Dendritic cell treated with granulocyte-macrophage colony-stimulating factor and Interleukin-4, amounts not matched to agents 40 ng/mL and 50 ng/mL, for 4 days (primary cell): ENCODE measurements at regions of chr10 and their contacts with region 1.

Region 1: DNA sequence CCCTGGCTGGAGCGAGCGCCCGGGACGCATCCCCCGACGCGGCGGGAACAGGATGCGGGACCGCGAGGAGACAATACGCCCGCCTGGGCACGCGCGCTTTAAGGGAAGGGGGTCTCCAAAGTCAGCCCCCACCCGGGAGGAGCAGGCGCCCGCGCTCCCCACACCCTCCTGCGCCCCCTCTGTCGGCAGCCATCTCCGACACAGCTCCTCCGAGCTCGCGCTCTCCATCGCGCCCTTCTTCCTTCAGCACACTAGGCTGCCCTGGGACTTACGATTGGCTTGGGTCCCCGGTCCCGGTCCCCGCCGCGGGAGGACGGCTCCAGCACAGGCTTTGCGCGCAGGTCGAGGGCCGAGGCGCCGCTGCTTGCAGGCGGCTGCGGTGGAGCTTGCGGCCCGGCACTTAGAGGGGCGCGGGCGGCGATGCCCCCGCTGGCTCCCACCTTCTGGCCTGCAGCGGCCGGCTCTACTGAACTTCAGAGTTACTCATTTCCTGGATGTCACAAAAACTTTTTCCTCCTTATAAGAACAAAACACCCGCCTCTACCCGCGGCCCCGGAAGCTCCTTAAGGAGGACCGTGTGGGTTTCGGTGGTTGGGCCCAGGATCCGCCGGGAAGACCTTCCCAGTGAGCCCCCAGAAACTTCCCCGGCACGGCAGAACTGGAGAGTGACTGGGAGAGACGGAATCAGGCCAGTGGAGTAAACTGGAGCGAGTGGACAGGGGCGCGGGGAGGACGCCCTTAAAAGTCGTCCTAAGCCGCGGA is at the start of gene ITPRIP:
- H3K4me3 Mint-ChIP-seq: peak within 1 kb of the TSS; percentile 88
- H3K27ac Mint-ChIP-seq: peak within 1 kb of the TSS; percentile 94
- H3K4me1 Mint-ChIP-seq: peaks cover 60% of the 10 kb centered on the region
- H3K27me3 Mint-ChIP-seq: peaks cover 9% of the 10 kb centered on the region

Region 2: GRCh38 chr10:104268716-104269645 is 69.2 kb before region 1 on chr10 and contains the start of gene GSTO2:
- intact Hi-C with region 1: loop called (anchors 2 kb)
- H3K4me3 Mint-ChIP-seq: peak within 1 kb of the TSS; percentile 91
- H3K27ac Mint-ChIP-seq: peak within 1 kb of the TSS; percentile 92
- H3K4me1 Mint-ChIP-seq: peaks cover 8% of the 10 kb centered on the region
- H3K27me3 Mint-ChIP-seq: no peaks in the 10 kb centered on the region

Region 3: DNA sequence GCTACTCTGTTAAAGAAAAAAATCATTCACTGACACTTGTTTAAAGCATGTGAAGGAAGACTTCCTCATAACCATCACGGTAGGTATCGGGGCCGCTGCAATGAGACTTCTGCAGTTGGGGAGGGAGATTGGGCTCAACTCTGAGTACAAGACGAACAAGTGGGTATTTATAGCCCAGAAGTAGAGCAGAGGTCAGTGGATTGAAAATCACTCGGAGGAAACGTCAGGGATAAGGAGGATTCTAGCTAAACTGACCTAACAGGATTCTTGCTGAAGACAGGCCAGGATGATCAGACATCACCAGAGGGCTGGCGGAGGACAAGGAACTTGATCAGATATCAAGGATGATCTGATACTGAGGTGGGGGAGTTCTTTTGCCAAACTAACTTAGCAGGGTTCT is 33.2 kb before region 1 on chr10:
- intact Hi-C with region 1: loop called (anchors 1 kb)
- H3K4me3 Mint-ChIP-seq: no peak overlapping the region
- H3K27ac Mint-ChIP-seq: no peak overlapping the region
- H3K4me1 Mint-ChIP-seq: peaks cover 30% of the 10 kb centered on the region
- H3K27me3 Mint-ChIP-seq: peaks cover 4% of the 10 kb centered on the region

Region 4: DNA sequence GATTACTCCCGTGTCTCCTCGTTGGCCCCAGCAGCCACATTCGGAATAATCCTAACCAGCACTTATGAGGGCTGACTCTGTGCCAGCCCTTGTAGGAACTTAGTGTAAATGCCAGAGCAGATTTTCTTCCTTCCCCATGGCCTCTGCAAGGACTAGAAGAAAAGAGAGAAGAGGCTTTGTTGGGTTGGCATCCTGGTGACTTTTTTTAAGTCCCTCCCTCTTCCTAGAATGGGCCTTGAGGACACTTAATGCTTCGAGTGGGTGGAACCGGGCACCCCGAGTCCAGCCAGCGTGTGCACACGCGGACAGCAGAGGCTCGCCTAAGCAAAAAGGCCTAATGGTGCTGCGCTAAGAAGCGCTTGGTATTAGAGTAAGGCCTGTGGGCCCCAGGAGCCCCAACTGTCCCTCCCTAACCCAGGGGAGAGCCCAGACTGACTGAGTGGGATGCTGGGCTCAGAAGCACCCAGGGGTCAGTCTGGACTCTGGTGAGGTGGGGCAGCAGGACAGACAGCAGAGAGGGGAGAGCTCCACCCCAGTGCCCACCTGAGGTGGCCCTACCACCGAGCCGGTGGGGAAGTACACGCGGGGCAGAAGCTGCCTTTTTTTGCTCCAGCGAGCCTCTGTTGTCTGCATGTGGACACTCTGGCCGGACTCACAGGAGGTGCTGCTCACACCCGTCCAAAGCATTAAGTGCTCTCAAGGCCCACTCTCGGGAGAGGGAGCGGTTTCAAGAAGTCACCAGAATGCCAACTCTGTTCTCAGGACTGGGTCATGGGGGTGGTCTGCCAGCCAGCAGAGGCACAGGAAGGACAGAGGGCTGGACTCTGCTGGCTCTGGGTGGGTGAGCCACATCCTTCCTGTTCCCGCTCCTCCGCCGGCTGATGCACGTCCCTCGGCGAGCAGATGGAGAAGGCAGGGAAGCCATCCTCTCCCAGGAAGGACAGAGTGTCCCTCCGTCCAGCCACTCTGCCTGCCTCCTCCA is 12.4 kb before region 1 on chr10:
- intact Hi-C with region 1: loop called (anchors 1 kb)
- H3K4me3 Mint-ChIP-seq: peak overlapping the region; percentile 44
- H3K27ac Mint-ChIP-seq: peak overlapping the region; percentile 80
- H3K4me1 Mint-ChIP-seq: peaks cover 99% of the 10 kb centered on the region
- H3K27me3 Mint-ChIP-seq: no peaks in the 10 kb centered on the region

Region 5: DNA sequence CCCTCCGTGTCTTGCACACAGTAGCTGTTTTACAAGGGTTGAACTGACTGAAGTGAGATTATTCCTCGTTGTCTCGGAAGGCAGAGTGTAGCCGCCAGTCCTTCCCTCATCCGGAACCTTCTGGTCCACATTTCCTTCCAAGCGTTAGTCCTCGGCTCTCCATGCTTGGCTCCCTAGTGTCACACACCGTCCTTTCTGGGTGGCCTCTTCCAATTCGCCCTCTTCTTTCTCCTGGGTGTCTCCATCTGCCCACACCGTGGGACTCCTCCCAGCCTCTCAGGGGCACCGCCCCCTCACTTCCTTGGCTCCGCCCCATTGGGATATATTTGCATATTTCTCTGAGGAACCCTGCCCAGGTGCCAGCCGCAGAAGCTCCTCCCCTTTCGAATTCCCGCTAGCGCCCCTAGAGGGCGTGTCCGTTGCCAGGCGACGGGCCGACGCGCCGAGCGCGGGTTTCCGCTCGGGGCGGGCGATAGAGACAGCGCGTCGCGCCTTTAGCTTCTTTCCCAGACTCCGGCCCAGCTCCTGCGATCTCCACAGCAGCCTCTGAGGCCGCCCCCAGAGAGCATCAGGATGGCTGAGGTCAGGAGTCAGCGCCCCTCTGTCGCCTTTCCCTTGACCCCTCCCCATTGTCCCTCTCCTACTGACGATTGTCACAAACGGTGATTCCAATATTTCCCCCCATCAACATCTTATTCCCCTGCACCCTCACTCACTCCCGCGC is 15.3 kb after region 1 on chr10 and contains the start of gene CFAP58:
- intact Hi-C with region 1: loop called (anchors 1 kb)
- H3K4me3 Mint-ChIP-seq: no peak within 1 kb of the TSS
- H3K27ac Mint-ChIP-seq: no peak within 1 kb of the TSS
- H3K4me1 Mint-ChIP-seq: peaks cover 2% of the 10 kb centered on the region
- H3K27me3 Mint-ChIP-seq: no peaks in the 10 kb centered on the region

Region 6: DNA sequence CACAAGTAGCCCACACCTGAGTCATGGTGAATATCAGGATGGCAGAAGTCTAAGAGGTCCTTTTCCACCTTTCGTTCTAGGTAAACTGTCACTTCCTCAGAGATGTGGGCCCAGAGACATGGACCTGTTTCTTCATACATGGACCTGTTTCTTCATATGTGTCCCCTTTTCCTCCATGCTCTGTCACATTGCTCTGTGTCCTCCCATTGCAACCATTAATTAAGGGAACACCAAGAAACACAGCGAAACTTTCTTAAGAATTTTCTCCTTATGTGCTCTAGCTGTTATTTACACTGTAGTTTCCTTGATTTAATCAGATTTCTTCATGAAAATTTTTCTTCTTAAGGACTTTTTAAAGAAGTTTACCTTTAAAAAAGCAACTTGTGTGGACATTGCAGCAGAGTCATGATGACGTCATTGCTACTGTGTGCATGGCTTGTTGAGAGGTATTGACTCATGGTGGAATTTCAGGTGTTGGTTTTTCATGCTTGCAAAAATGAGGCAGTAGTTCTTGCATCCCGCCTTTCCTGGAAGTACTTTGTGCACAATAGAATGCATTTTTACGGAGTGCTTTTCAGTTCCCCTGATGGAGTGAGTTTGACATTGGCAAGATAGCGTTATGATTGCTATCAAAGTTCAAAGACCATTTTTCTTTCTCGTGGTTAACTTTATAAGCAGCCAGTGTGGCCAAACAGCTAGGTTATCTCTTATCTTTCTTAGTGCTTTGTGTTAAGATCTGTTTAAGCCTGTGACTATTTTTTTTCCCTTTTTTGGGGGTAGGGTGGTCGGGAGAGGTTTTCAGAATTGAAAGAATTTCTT is 53.2 kb after region 1 on chr10:
- intact Hi-C with region 1: no loop called
- H3K4me3 Mint-ChIP-seq: no peak overlapping the region
- H3K27ac Mint-ChIP-seq: no peak overlapping the region
- H3K4me1 Mint-ChIP-seq: peaks cover 5% of the 10 kb centered on the region
- H3K27me3 Mint-ChIP-seq: peaks cover 15% of the 10 kb centered on the region